K562 (cell line): ENCODE measurements at regions of chr18 and their contacts with region 1.

Region 1: DNA sequence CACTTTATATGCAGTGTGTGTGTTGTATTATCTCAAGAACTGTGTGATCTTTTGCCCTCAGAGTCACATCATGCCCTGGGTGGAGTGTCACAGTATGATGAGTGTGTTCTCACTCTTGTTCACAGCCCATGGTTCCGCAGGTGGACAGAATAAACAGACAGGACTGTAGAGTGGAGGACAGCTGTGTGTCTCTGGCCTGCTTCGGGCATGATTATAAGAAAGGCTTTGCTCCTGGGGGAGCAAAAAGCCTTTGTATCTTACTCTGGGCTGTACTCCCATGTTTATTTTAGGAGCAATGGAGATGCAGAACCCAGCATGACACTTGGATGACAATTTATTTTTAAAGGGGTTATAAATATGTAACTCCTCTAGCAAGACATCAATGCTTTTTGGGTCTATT is 371.7 kb upstream of the MEX3C start:
- DNase-seq: no peak
- ATAC-seq: no peak
- H3K4me3 ChIP-seq: no peak overlapping the region
- H3K27ac ChIP-seq: no peak overlapping the region
- H3K4me1 ChIP-seq: no peaks in the 10 kb centered on the region
- H3K27me3 ChIP-seq: no peaks in the 10 kb centered on the region
- CTCF ChIP-seq: no peak
- EP300 ChIP-seq: no peak
- POLR2A ChIP-seq: no peak
- RAD21 ChIP-seq: no peak

Region 2: GRCh38 chr18:51692612-51693011 is 123.5 kb after region 1 on chr18:
- CTCF ChIA-PET with region 1: no interaction called
- POLR2A ChIA-PET with region 1: no interaction called
- in situ Hi-C with region 1: no loop called
- intact Hi-C with region 1: loop called (anchors 5 kb)
- DNase-seq: no peak
- ATAC-seq: no peak
- H3K4me3 ChIP-seq: no peak overlapping the region
- H3K27ac ChIP-seq: no peak overlapping the region
- H3K4me1 ChIP-seq: no peaks in the 10 kb centered on the region
- H3K27me3 ChIP-seq: no peaks in the 10 kb centered on the region
- CTCF ChIP-seq: no peak
- EP300 ChIP-seq: no peak
- POLR2A ChIP-seq: no peak
- RAD21 ChIP-seq: no peak